CD4-positive, alpha-beta memory T cell (primary cell): ENCODE measurements at regions of chr2 and their contacts with region 1.

Region 1: GRCh38 chr2:239275044-239275685 is 125.7 kb downstream of the HDAC4 start:
- DNase-seq: peak; percentile 86 to 96 (median 87)
- H3K4me3 ChIP-seq: peak overlapping the region; percentile 49 to 61
- H3K4me3 Mint-ChIP-seq: peak overlapping the region; percentile 86 to 94 (median 89)
- H3K27ac ChIP-seq: peak overlapping the region; percentile 75
- H3K27ac Mint-ChIP-seq: peak overlapping the region; percentile 90 to 99 (median 97)
- H3K4me1 ChIP-seq: peaks cover 38% of the 10 kb centered on the region
- H3K4me1 Mint-ChIP-seq: peaks cover 27 to 65% (median 39%) of the 10 kb centered on the region in 4 donors
- H3K27me3 ChIP-seq: no peaks in the 10 kb centered on the region
- H3K27me3 Mint-ChIP-seq: no peaks in the 10 kb centered on the region

Region 2: DNA sequence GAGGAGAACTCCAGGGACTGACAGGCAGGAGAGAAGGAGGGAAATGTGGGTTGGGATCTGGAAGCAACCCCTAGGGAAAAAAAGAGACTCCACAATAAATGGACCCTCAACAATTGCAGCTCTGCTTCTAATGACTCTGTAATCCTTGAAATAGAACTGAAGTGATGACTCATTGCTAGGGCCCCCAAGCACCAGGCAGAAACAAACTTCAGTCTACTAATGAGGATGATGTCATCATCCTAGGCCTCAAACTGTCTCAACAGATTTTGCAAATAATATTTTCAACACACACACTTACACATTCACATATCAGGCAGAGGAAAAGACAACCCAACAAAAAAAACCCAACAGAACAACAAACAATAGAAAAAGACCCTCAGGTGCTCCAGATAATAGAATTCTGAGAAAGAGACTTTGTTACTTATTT is 17.6 kb before region 1 on chr2:
- CTCF ChIA-PET with region 1: interaction called, 3 read pairs
- POLR2A ChIA-PET with region 1: interaction called, 10 read pairs
- intact Hi-C with region 1: no loop called
- DNase-seq: peak in 1 of 5 donors; percentile 50
- H3K4me3 ChIP-seq: no peak overlapping the region
- H3K4me3 Mint-ChIP-seq: peak overlapping the region in 5 of 8 donors; percentile 20 to 92 (median 85)
- H3K27ac ChIP-seq: no peak overlapping the region
- H3K27ac Mint-ChIP-seq: peak overlapping the region in 5 of 7 donors; percentile 4 to 77 (median 65)
- H3K4me1 ChIP-seq: peaks cover 91% of the 10 kb centered on the region
- H3K4me1 Mint-ChIP-seq: peaks cover 57 to 94% (median 76%) of the 10 kb centered on the region in 4 donors
- H3K27me3 ChIP-seq: no peaks in the 10 kb centered on the region
- H3K27me3 Mint-ChIP-seq: no peaks in the 10 kb centered on the region

Region 3: DNA sequence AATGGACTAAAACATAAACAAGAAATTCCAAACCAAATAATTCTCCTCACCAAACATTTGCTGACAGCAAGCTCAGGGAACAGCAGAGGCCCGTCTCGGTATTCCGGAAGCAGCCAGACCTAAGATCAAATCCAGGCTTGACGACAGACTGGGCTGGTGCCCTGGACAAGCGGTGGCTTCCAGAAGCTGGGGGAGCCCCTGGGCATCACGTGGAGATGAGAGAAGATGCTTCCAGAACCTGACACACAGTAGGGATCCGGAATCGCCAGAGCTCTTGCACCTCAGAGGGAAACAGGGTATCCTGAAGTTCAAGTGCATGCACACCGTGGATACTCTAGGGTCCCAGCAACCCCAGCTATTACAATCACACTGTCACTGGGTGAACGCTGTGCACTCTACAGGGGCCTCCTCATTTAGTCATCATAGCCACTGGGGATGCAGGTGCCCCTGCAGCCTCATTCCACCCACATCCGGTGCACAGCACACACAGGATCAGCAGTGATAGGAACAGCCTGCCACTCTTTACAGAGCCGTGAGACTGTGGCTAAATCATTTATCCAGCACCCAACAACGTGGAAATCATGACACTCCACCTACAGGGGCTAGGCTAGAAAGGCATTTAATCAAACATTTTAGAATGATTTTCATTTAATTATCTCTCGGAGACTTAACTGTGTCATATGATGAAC is 23.1 kb after region 1 on chr2:
- CTCF ChIA-PET with region 1: interaction called, 196 read pairs
- POLR2A ChIA-PET with region 1: interaction called, 74 read pairs
- intact Hi-C with region 1: loop called (anchors 1 kb)
- DNase-seq: peak; percentile 75 to 94 (median 83)
- H3K4me3 ChIP-seq: peak overlapping the region; percentile 56 to 58
- H3K4me3 Mint-ChIP-seq: peak overlapping the region; percentile 86 to 92 (median 90)
- H3K27ac ChIP-seq: peak overlapping the region; percentile 64
- H3K27ac Mint-ChIP-seq: peak overlapping the region; percentile 92 to 98 (median 95)
- H3K4me1 ChIP-seq: peaks cover 61% of the 10 kb centered on the region
- H3K4me1 Mint-ChIP-seq: peaks cover 36 to 79% (median 57%) of the 10 kb centered on the region in 4 donors
- H3K27me3 ChIP-seq: no peaks in the 10 kb centered on the region
- H3K27me3 Mint-ChIP-seq: no peaks in the 10 kb centered on the region

Region 4: GRCh38 chr2:239326831-239327535 is 51.8 kb after region 1 on chr2:
- CTCF ChIA-PET with region 1: no interaction called
- POLR2A ChIA-PET with region 1: interaction called, 17 read pairs
- intact Hi-C with region 1: loop called (anchors 2 kb)
- DNase-seq: peak; percentile 65 to 89 (median 70)
- H3K4me3 ChIP-seq: no peak overlapping the region
- H3K4me3 Mint-ChIP-seq: peak overlapping the region in 7 of 8 donors; percentile 46 to 76 (median 59)
- H3K27ac ChIP-seq: peak overlapping the region; percentile 46
- H3K27ac Mint-ChIP-seq: peak overlapping the region; percentile 89 to 96 (median 95)
- H3K4me1 ChIP-seq: peaks cover 61% of the 10 kb centered on the region
- H3K4me1 Mint-ChIP-seq: peaks cover 43 to 79% (median 59%) of the 10 kb centered on the region in 4 donors
- H3K27me3 ChIP-seq: no peaks in the 10 kb centered on the region
- H3K27me3 Mint-ChIP-seq: no peaks in the 10 kb centered on the region

Region 5: DNA sequence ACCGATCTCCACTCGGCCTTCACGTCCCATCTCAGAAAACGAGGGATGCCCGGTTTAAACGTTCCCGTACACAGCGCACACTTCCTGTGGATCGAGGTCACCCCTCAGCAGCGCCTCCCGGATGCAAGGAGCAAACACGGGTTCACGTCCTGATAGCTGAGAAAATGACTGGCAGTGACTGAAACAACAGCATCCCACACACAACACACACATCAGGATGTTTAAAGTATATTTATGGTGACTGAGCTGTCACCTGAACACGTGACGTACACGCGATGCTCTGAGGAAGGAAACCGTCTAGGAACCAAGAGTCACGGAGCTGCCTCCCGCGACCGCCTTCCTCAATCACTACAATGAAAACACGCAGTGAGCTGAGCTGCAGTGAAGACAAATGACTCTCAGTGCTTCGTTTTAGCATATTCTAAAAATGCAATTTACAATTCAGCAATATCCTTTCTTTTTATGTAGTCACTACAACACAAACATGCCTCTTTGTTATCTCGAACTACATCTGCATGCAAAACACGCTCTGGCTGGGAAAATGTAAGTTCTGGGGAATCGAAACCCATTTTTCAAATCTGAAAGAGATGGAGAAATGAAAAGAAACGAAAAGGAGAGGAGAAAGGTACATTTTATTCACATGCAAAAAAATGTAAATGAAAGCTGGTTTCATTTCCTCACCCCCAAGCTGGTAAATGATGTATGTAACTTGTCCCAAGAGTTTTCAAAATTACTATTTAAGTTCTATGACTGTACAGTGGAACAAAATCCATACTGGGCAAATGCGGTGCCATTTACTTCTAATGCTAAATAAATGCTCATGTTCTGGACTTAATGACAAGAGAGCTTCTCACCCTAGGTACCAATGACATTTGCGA is 105.9 kb after region 1 on chr2:
- CTCF ChIA-PET with region 1: interaction called, 8 read pairs
- POLR2A ChIA-PET with region 1: interaction called, 15 read pairs
- intact Hi-C with region 1: no loop called
- DNase-seq: peak; percentile 68 to 87 (median 77)
- H3K4me3 ChIP-seq: peak overlapping the region; percentile 39 to 49
- H3K4me3 Mint-ChIP-seq: peak overlapping the region; percentile 83 to 94 (median 87)
- H3K27ac ChIP-seq: peak overlapping the region; percentile 62
- H3K27ac Mint-ChIP-seq: peak overlapping the region; percentile 90 to 99 (median 96)
- H3K4me1 ChIP-seq: peaks cover 21% of the 10 kb centered on the region
- H3K4me1 Mint-ChIP-seq: peaks cover 17 to 31% (median 19%) of the 10 kb centered on the region in 4 donors
- H3K27me3 ChIP-seq: no peaks in the 10 kb centered on the region
- H3K27me3 Mint-ChIP-seq: no peaks in the 10 kb centered on the region